Right cardiac atrium (tissue), 5 donors: ENCODE measurements at regions of chr3 and their contacts with region 1.

Region 1: DNA sequence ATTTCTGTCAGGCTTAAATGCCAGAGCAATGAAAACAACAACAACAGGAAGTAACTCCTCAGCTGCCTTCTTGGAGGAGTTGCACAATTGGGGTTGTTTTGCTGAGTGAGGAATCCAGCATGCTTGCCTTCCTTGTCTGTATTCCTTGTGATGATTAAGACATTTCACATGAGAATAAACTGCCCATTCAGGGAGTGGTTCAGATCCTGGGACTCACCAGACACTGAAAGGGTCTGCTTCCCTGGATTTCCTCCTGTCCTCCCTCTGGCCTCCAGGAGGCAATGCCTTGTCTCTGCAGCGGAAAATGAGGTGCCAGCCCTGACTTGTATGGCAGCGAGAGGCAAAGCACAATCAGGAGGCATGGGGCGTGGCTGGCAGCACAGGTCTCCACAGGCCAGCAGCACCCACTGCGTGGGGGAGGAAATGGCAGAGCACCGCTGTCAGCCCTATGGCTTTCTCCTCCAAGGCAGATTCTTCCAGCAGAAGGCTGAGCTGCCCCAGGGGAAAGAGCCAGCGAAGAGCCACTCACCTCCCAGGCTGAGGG is 41.5 kb downstream of the RBP2 start:
- DNase-seq: peak in 1 of 3 donors; percentile 62
- ATAC-seq: peak; percentile 53 to 62
- H3K4me3 ChIP-seq: no peak overlapping the region
- H3K27ac ChIP-seq: peak overlapping the region; percentile 8
- H3K4me1 ChIP-seq: peaks cover 4% of the 10 kb centered on the region
- H3K27me3 ChIP-seq: no peaks in the 10 kb centered on the region

Region 2: DNA sequence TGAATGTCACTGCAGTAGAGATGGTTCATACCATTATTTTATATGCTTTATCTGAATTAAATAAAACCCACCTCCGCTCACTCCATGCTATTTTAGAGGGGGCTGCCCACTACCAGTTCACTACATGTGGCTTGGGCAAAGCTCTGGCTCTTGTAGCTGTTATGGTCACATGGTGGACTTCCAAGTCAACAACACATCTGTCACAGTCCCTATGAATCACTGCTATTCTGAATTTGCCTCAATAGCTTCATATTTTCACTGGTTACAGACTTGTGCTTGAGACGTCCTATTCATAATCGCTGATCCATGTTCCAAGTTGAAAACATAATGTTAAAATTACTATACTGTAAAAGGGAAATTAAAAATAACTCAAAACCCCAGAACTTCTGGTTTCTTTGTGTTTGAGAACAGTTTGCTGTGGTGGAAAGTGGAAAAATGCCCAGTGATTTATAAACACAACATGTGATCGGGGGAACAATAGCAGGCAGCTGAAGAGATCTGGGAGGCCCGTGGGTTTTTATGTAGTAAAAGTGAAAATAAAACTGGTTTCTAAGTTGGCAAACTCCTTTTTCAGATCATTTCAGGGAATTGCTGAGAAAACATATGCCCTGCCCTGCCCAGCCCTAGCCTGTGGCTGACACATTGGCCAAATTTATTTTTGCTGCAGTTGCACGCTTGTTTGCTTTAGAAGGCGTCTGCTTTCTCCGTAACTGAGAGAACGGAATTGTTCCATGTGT is 261.3 kb before region 1 on chr3:
- intact Hi-C with region 1: no loop called
- DNase-seq: peak in 1 of 3 donors; percentile 33
- ATAC-seq: peak; percentile 40 to 92
- H3K4me3 ChIP-seq: peak overlapping the region; percentile 38
- H3K27ac ChIP-seq: no peak overlapping the region
- H3K4me1 ChIP-seq: no peaks in the 10 kb centered on the region
- H3K27me3 ChIP-seq: no peaks in the 10 kb centered on the region

Region 3: DNA sequence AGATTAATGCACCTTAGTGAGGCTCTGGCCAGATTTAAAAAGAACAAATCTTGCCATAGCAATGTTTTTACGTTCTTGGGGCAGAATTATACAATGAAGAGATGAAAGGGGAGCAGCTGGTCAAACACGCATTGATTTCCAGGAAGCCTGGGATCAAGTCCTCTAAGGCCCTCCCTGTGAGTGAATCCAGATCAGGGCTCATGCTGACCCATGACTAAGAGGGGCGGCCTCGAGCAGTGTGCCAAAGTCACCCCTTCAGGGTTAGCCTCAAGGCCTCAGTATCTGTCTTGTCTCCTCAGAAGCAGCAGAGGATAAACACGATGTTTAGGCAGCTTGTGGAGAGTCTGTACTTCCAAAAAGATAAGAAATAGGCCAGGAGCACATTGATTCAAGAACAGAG is 114.0 kb after region 1 on chr3:
- intact Hi-C with region 1: loop called in 2 of 4 experiments (anchors 5 to 10 kb)
- DNase-seq: peak in 1 of 3 donors; percentile 79
- ATAC-seq: peak; percentile 73 to 76
- H3K4me3 ChIP-seq: no peak overlapping the region
- H3K27ac ChIP-seq: no peak overlapping the region
- H3K4me1 ChIP-seq: no peaks in the 10 kb centered on the region
- H3K27me3 ChIP-seq: no peaks in the 10 kb centered on the region